CD4-positive, alpha-beta memory T cell (primary cell): ENCODE measurements at regions of chr15 and their contacts with region 1.

Region 1: DNA sequence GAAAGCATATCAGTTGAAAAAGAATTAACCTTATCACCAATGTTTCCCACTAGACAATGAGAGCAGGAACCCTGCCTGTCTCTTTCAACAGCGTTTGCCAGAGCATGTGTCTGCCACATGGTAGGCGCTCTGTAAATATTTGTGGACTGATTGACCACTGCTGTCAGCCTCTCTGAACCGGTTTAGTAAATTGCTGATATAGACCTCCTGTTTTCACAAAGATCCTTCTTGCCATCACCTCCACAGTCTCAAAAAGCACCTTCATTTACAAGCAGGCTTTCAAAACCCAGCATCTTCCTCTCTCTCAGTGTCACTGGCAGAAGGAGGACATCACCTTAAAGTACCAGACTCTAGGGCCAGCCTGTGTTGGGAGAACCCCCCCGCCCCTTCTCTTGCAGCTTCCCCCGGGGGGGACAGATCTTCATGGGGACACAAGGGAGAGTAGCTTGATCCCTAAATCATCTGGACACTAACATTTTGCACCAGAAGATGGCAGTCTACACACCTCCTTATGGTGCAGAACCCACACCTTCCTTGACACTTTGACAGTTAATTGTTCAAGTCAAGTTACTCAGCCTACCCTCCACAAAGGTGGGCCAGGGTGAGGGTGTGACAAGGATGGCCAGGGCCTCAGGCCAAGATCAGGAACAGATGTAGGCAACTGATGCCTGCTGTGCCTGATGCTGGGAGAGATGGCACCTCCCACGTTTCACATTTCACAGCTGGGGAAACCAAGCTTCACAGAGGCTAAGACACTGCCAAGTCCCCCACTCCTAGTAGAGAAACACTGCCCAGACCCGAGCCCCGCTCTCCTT is 37.8 kb upstream of the USP3 start:
- DNase-seq: peak; percentile 72 to 77 (median 74)
- H3K4me3 ChIP-seq: no peak overlapping the region
- H3K4me3 Mint-ChIP-seq: peak overlapping the region in 1 of 8 donors; percentile 20
- H3K27ac ChIP-seq: no peak overlapping the region
- H3K27ac Mint-ChIP-seq: peak overlapping the region in 6 of 7 donors; percentile 47 to 89 (median 86)
- H3K4me1 ChIP-seq: peaks cover 9% of the 10 kb centered on the region
- H3K4me1 Mint-ChIP-seq: peaks cover 18 to 26% (median 24%) of the 10 kb centered on the region in 4 donors
- H3K27me3 ChIP-seq: no peaks in the 10 kb centered on the region
- H3K27me3 Mint-ChIP-seq: peaks cover 0 to 2% of the 10 kb centered on the region in 2 donors

Region 2: DNA sequence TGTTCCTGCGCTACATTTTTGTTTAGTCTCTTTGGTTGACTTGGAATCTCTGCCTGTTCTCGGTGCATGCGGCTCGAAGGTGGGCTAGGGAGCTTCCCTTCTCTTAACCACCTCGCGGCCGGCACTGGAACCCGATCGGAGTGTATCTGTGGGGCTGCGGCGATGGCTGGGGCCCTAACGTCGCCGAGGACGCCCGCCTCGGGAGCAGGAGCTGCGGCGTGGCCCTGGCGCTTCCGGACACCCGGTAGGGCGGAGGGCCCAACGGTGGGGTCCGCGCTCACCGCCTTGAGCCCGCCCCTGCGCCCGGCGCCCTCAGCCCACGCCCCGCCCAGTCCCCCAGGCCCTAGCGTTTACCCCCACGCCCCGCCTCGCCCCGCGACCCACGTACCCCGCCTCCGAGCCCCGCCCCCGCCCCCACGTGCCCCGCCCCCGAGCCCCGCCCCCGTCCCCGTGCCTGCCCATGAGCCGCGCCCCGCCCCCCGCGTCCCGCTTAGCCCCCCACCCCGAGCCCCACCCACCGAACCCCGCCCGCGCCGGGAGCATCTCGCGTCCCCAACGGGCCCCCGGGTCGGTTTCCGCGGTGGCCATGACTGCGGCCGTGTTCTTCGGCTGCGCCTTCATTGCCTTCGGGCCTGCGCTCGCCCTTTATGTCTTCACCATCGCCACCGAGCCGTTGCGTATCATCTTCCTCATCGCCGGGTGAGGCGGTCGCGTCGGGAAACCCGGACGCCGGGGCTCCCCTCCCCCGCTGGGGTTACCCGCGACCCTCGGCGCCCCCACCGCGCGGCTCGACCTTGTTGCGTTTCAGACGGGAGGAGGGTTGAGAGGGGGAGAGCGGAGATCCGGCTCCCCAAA is 189.3 kb before region 1 on chr15 and contains the start of gene APH1B:
- CTCF ChIA-PET with region 1: no interaction called
- POLR2A ChIA-PET with region 1: no interaction called
- intact Hi-C with region 1: no loop called
- DNase-seq: peak; percentile 75 to 83 (median 77)
- H3K4me3 ChIP-seq: peak within 1 kb of the TSS; percentile 66 to 84
- H3K4me3 Mint-ChIP-seq: peak within 1 kb of the TSS; percentile 84 to 90 (median 88)
- H3K27ac ChIP-seq: peak within 1 kb of the TSS; percentile 68
- H3K27ac Mint-ChIP-seq: peak within 1 kb of the TSS; percentile 79 to 94 (median 92)
- H3K4me1 ChIP-seq: peaks cover 31% of the 10 kb centered on the region
- H3K4me1 Mint-ChIP-seq: peaks cover 19 to 46% (median 31%) of the 10 kb centered on the region in 4 donors
- H3K27me3 ChIP-seq: no peaks in the 10 kb centered on the region
- H3K27me3 Mint-ChIP-seq: no peaks in the 10 kb centered on the region
- total RNA-seq, gene APH1B: 23.0 to 28.4 TPM

Region 3: DNA sequence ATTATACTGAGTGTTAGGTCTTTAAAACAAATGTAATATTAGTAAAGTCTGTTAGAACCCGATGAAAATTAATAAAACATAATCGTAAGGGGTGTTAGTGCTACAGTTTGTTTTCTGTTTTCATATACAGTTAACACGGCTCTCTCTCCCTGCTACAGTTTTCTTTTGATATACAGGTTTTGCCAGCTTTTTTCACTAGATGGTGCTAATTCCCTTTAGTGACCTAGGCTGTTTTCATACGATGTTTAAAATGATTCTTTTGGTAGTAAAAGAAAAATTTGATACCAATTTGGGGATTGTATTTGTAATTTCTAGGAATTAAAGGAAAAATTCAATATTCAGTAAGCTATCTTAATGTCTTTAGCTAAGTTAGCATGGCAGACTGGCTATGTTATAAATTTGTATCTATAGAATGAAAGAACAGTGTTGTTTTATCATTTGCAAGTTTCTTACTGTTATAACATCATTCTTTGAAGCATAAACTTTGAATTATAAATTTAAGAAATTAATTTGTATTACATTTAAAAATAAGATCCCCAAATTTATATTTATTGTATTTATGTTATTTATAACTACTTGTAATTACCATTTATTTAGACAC is 177.7 kb before region 1 on chr15:
- CTCF ChIA-PET with region 1: no interaction called
- POLR2A ChIA-PET with region 1: no interaction called
- intact Hi-C with region 1: loop called (anchors 2 kb)
- DNase-seq: peak in 4 of 5 donors; percentile 45 to 55 (median 48)
- H3K4me3 ChIP-seq: no peak overlapping the region
- H3K4me3 Mint-ChIP-seq: no peak overlapping the region
- H3K27ac ChIP-seq: no peak overlapping the region
- H3K27ac Mint-ChIP-seq: peak overlapping the region in 6 of 7 donors; percentile 1 to 81 (median 34)
- H3K4me1 ChIP-seq: peaks cover 7% of the 10 kb centered on the region
- H3K4me1 Mint-ChIP-seq: peaks cover 6 to 8% (median 7%) of the 10 kb centered on the region in 4 donors
- H3K27me3 ChIP-seq: no peaks in the 10 kb centered on the region
- H3K27me3 Mint-ChIP-seq: no peaks in the 10 kb centered on the region

Region 4: GRCh38 chr15:63430766-63431449 is 35.7 kb before region 1 on chr15:
- CTCF ChIA-PET with region 1: no interaction called
- POLR2A ChIA-PET with region 1: no interaction called
- intact Hi-C with region 1: no loop called
- DNase-seq: no peak
- H3K4me3 ChIP-seq: no peak overlapping the region
- H3K4me3 Mint-ChIP-seq: no peak overlapping the region
- H3K27ac ChIP-seq: no peak overlapping the region
- H3K27ac Mint-ChIP-seq: no peak overlapping the region
- H3K4me1 ChIP-seq: peaks cover 2% of the 10 kb centered on the region
- H3K4me1 Mint-ChIP-seq: peaks cover 0 to 5% (median 2%) of the 10 kb centered on the region in 4 donors
- H3K27me3 ChIP-seq: no peaks in the 10 kb centered on the region
- H3K27me3 Mint-ChIP-seq: peaks cover 4 to 10% of the 10 kb centered on the region in 2 donors

Region 5: GRCh38 chr15:63487076-63487757 is 20.6 kb after region 1 on chr15:
- CTCF ChIA-PET with region 1: interaction called, 31 read pairs
- POLR2A ChIA-PET with region 1: interaction called, 27 read pairs
- intact Hi-C with region 1: loop called (anchors 1 kb)
- DNase-seq: peak; percentile 82 to 87 (median 84)
- H3K4me3 ChIP-seq: no peak overlapping the region
- H3K4me3 Mint-ChIP-seq: peak overlapping the region in 7 of 8 donors; percentile 69 to 89 (median 72)
- H3K27ac ChIP-seq: peak overlapping the region; percentile 41
- H3K27ac Mint-ChIP-seq: peak overlapping the region; percentile 78 to 93 (median 89)
- H3K4me1 ChIP-seq: peaks cover 69% of the 10 kb centered on the region
- H3K4me1 Mint-ChIP-seq: peaks cover 40 to 81% (median 59%) of the 10 kb centered on the region in 4 donors
- H3K27me3 ChIP-seq: no peaks in the 10 kb centered on the region
- H3K27me3 Mint-ChIP-seq: no peaks in the 10 kb centered on the region

Region 6: GRCh38 chr15:63504247-63504978 is 37.8 kb after region 1 on chr15 and contains the start of gene USP3:
- CTCF ChIA-PET with region 1: interaction called, 71 read pairs
- POLR2A ChIA-PET with region 1: interaction called, 906 read pairs
- intact Hi-C with region 1: loop called (anchors 1 kb)
- DNase-seq: peak; percentile 92 to 95 (median 94)
- H3K4me3 ChIP-seq: peak within 1 kb of the TSS; percentile 63 to 83
- H3K4me3 Mint-ChIP-seq: peak within 1 kb of the TSS; percentile 90 to 98 (median 97)
- H3K27ac ChIP-seq: peak within 1 kb of the TSS; percentile 98
- H3K27ac Mint-ChIP-seq: peak within 1 kb of the TSS; percentile 93 to 100 (median 99)
- H3K4me1 ChIP-seq: peaks cover 81% of the 10 kb centered on the region
- H3K4me1 Mint-ChIP-seq: peaks cover 61 to 84% (median 68%) of the 10 kb centered on the region in 4 donors
- H3K27me3 ChIP-seq: no peaks in the 10 kb centered on the region
- H3K27me3 Mint-ChIP-seq: no peaks in the 10 kb centered on the region
- total RNA-seq, gene USP3: 148 to 159 TPM

Region 7: GRCh38 chr15:63531586-63531985 is 65.0 kb after region 1 on chr15:
- CTCF ChIA-PET with region 1: interaction called, 10 read pairs
- POLR2A ChIA-PET with region 1: interaction called, 3 read pairs
- intact Hi-C with region 1: no loop called
- DNase-seq: no peak
- H3K4me3 ChIP-seq: no peak overlapping the region
- H3K4me3 Mint-ChIP-seq: peak overlapping the region in 5 of 8 donors; percentile 21 to 59 (median 35)
- H3K27ac ChIP-seq: no peak overlapping the region
- H3K27ac Mint-ChIP-seq: peak overlapping the region in 5 of 7 donors; percentile 16 to 65 (median 25)
- H3K4me1 ChIP-seq: peaks cover 93% of the 10 kb centered on the region
- H3K4me1 Mint-ChIP-seq: peaks cover 70 to 95% (median 86%) of the 10 kb centered on the region in 4 donors
- H3K27me3 ChIP-seq: no peaks in the 10 kb centered on the region
- H3K27me3 Mint-ChIP-seq: no peaks in the 10 kb centered on the region

Region 8: DNA sequence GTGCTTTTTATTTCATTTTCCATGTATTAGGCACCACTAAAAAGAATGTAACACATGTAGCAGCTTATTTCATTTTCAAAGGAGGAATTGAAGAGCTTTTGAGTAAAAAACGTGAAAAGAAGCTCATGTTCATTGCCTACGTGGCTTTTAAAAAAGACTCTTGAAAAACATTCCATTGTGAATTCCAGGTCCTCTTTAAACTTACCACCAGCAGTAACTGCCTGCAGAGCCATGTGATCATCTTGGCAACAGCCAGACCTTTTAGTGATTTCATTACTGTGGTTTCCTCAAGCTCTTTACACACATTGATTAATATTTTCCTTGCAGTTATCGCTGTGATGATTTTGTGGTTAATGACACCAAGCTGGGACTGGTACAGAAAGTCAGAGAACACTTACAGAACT is 86.8 kb after region 1 on chr15:
- CTCF ChIA-PET with region 1: interaction called, 19 read pairs
- POLR2A ChIA-PET with region 1: interaction called, 3 read pairs
- intact Hi-C with region 1: no loop called
- DNase-seq: peak in 2 of 5 donors; percentile 9
- H3K4me3 ChIP-seq: no peak overlapping the region
- H3K4me3 Mint-ChIP-seq: peak overlapping the region in 2 of 8 donors; percentile 26 to 53
- H3K27ac ChIP-seq: peak overlapping the region; percentile 9
- H3K27ac Mint-ChIP-seq: peak overlapping the region in 6 of 7 donors; percentile 19 to 79 (median 54)
- H3K4me1 ChIP-seq: peaks cover 42% of the 10 kb centered on the region
- H3K4me1 Mint-ChIP-seq: peaks cover 34 to 60% (median 49%) of the 10 kb centered on the region in 4 donors
- H3K27me3 ChIP-seq: no peaks in the 10 kb centered on the region
- H3K27me3 Mint-ChIP-seq: no peaks in the 10 kb centered on the region

Region 9: DNA sequence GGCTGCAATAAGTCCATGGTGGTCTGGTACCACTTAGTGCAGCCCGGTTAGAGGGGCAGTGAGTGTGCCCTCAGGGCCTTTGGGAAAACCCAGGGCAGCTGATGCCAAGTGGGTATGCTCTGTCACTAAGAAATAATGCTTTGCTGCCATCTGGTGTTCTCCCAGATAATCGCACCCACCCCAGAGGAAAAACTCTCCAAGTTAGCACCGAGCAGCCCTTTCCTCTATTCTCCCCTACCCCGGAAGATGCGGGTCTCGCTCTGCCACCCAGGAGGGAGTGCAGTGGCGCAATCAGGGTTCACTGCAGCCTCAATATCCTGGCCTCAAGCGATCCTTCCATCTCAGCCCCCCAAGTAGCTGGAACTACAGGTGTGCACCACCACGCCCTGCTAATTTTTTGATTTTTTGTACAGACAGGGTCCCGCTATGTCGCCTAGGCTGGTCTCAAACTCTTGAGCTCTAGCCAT is 601.0 kb after region 1 on chr15:
- CTCF ChIA-PET with region 1: interaction called, 12 read pairs
- POLR2A ChIA-PET with region 1: no interaction called
- intact Hi-C with region 1: no loop called
- DNase-seq: peak; percentile 65 to 73 (median 66)
- H3K4me3 ChIP-seq: no peak overlapping the region
- H3K4me3 Mint-ChIP-seq: no peak overlapping the region
- H3K27ac ChIP-seq: no peak overlapping the region
- H3K27ac Mint-ChIP-seq: peak overlapping the region in 3 of 7 donors; percentile 43 to 77 (median 66)
- H3K4me1 ChIP-seq: peaks cover 9% of the 10 kb centered on the region
- H3K4me1 Mint-ChIP-seq: peaks cover 4 to 8% (median 5%) of the 10 kb centered on the region in 4 donors
- H3K27me3 ChIP-seq: no peaks in the 10 kb centered on the region
- H3K27me3 Mint-ChIP-seq: no peaks in the 10 kb centered on the region